Posterior cingulate gyrus (tissue), 11 donors: ENCODE measurements at regions of chr11 and their contacts with region 1.

Region 1: DNA sequence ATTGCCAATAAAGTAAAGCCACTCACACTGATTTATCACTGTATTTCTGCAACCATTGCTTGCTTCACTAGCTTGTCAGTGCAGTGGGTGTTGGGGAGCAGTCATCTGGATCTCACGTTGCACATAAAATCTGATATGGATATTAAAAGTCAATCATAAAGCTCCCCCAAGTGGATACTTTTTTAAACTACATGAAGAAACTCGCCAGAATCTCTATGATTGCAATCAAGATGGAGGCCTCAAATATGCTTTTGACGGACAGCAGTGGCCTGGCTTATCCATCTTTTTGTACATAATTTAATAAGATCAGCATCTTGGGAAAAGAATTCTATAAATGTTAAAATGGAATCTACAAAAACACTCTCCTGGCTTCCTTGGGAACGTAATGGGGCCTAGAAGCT is 137.7 kb downstream of the WT1 start:
- DNase-seq: peak in 4 of 10 donors; percentile 13 to 77 (median 40)

Region 2: DNA sequence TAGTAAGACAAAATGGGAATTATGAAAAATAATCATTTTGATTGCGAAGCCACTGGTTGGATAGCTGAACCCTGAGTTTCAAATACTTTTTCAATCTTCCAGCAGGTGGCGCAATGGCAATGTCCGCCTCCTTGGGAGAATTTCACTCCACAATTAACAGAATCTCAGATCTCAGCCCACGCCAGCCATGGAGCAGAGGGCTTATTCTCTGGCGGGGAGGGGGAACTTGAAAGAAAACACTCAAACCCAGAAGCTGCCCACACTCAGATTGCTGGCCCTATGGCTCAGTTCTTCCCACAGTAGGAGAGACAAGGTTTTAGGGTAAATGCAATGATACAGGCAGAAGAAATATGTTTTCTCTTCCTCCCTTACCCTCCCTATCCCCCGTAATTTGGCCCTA is 245.4 kb before region 1 on chr11:
- intact Hi-C with region 1: loop called (anchors 2 kb)
- DNase-seq: peak in 8 of 10 donors; percentile 36 to 90 (median 62)

Region 3: DNA sequence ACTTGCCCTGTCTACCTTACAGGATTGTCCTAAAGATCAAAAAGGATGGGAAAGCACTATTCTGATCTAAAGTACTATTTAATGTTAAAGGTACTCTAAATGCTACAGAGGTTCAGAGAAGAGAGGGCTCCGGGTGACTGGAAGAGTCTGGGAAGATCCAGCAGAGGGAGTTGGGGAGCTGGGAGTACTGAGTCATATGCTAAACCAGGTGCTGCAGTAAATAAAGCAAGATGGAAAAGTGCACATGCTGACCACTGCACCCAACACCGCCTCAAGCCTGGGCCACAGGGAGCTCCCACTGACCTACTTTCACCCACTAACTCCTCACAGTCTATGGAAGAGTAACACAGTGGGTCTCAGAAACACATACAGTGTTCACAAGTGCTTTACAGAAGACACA is 88.4 kb after region 1 on chr11:
- intact Hi-C with region 1: no loop called
- DNase-seq: no peak